HCT116 (cell line): ENCODE measurements at regions of chr12 and their contacts with region 1.

Region 1: GRCh38 chr12:62603061-62603810 is 136.6 kb downstream of the MON2 start:
- DNase-seq: peak; percentile 51
- ATAC-seq: peak; percentile 85
- H3K4me3 ChIP-seq: peak overlapping the region; percentile 72 to 79
- H3K27ac ChIP-seq: peak overlapping the region; percentile 99
- H3K4me1 ChIP-seq: peaks cover 11 to 36% of the 10 kb centered on the region in 2 experiments
- H3K27me3 ChIP-seq: no peaks in the 10 kb centered on the region
- CTCF ChIP-seq: peak in 1 of 3 experiments; percentile 25; a peak in 2 of 6 replicates
- POLR2A ChIP-seq: peak; percentile 43
- RAD21 ChIP-seq: peak; percentile 63

Region 2: DNA sequence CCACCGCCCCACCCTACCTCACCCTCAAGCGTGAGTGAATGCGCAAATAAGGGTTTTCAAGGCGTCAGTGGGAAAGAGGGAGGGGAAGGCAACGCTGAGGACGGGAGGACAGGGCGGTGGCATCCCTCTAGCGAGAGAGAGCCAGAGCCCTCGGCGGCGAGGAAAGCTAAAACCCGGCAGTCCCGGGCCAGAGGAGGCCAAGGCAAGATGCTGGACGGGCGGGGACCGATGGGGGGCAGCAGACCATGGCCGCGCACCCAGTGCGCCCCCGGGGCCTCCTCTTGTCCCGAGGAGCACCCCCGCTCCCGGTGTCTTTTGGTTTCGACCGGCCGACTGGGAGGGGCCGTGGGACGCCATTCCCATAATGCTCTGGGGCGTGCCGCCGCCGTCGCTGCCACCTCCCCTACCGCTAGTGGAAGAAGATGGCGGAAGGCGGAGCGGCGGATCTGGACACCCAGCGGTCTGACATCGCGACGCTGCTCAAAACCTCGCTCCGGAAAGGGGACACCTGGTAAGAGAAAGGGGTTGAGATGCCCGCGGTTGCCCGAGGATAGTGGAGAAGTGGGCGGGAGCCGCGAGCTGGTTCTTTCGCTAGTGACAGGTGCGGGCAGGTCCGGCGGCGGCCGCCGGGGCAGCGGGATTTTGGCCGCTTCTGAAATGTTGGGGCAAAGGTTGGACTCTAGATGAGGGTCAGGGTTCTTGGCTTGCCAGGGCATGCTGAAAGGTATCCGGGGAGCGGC is 343.1 kb before region 1 on chr12 and contains the start of gene USP15:
- CTCF ChIA-PET with region 1: no interaction called
- POLR2A ChIA-PET with region 1: no interaction called
- RAD21 ChIA-PET with region 1: no interaction called
- intact Hi-C with region 1: loop called (anchors 10 kb)
- DNase-seq: peak; percentile 94
- ATAC-seq: peak; percentile 92
- H3K4me3 ChIP-seq: peak within 1 kb of the TSS; percentile 56 to 84
- H3K27ac ChIP-seq: peak within 1 kb of the TSS; percentile 74
- H3K4me1 ChIP-seq: peaks cover 3 to 24% of the 10 kb centered on the region in 2 experiments; a peak in 3 of 4 replicates
- H3K27me3 ChIP-seq: no peaks in the 10 kb centered on the region
- CTCF ChIP-seq: peak; percentile 62 to 83 (median 77)
- POLR2A ChIP-seq: peak; percentile 87
- RAD21 ChIP-seq: peak; percentile 41
- total RNA-seq, gene USP15: 49.5 TPM

Region 3: GRCh38 chr12:62724947-62725447 is 121.8 kb after region 1 on chr12:
- CTCF ChIA-PET with region 1: no interaction called
- POLR2A ChIA-PET with region 1: no interaction called
- RAD21 ChIA-PET with region 1: no interaction called
- intact Hi-C with region 1: loop called (anchors 2 kb)
- DNase-seq: peak; percentile 99
- ATAC-seq: peak; percentile 93
- H3K4me3 ChIP-seq: peak overlapping the region in 1 of 2 experiments; percentile 48; a peak in 2 of 4 replicates
- H3K27ac ChIP-seq: peak overlapping the region; percentile 85
- H3K4me1 ChIP-seq: peaks cover 60 to 80% of the 10 kb centered on the region in 2 experiments
- H3K27me3 ChIP-seq: no peaks in the 10 kb centered on the region
- CTCF ChIP-seq: no peak
- POLR2A ChIP-seq: no peak
- RAD21 ChIP-seq: peak; percentile 43; the same call in 1 of the 2 replicates

Region 4: DNA sequence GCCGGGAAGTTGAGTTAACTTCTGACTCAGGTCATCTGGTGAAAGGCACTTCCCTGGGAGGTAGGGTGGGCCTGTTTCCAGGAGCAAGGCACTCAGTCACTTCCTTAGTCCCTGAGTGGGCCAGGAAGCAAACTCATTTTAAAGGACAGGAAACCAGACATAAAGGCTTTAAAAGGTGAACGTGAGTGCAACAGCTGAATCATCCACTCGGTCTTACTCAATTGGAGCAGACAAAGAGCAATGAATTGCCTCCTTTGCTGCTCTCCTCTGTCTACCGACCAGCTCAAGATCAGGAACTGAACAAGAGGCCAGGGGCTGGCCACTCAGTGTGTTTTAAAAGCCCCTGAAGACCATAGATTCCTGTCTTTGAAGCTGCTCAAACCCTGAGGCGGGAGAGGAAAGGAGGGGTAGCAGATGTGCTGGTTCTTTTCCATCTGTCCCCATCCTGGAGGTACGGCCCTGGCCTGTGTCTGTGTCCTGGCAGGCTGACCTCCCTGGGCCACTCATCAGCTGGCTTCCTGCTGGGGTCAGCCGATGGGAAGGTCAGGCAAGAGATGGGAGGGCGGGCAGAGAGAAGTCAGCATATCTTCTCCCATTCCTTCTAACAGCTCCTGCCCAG is 182.8 kb after region 1 on chr12:
- CTCF ChIA-PET with region 1: interaction called, 3 read pairs
- POLR2A ChIA-PET with region 1: interaction called, 3 read pairs
- RAD21 ChIA-PET with region 1: no interaction called
- intact Hi-C with region 1: loop called (anchors 2 kb)
- DNase-seq: peak; percentile 86
- ATAC-seq: peak; percentile 87
- H3K4me3 ChIP-seq: peak overlapping the region in 1 of 2 experiments; percentile 23; a peak in 2 of 4 replicates
- H3K27ac ChIP-seq: peak overlapping the region; percentile 55
- H3K4me1 ChIP-seq: peaks cover 9 to 35% of the 10 kb centered on the region in 2 experiments
- H3K27me3 ChIP-seq: no peaks in the 10 kb centered on the region
- CTCF ChIP-seq: no peak
- POLR2A ChIP-seq: no peak
- RAD21 ChIP-seq: peak; percentile 45